Mucosa of descending colon (tissue), 3 donors: ENCODE measurements at regions of chr21 and their contacts with region 1.

Region 1: GRCh38 chr21:41630249-41630648 is 122.3 kb upstream of the TMPRSS2 start:
- DNase-seq: peak; percentile 73 to 82 (median 74)
- ATAC-seq: peak; percentile 87
- H3K4me3 ChIP-seq: no peak overlapping the region
- H3K4me1 ChIP-seq: peaks cover 7% of the 10 kb centered on the region
- CTCF ChIP-seq: no peak

Region 2: DNA sequence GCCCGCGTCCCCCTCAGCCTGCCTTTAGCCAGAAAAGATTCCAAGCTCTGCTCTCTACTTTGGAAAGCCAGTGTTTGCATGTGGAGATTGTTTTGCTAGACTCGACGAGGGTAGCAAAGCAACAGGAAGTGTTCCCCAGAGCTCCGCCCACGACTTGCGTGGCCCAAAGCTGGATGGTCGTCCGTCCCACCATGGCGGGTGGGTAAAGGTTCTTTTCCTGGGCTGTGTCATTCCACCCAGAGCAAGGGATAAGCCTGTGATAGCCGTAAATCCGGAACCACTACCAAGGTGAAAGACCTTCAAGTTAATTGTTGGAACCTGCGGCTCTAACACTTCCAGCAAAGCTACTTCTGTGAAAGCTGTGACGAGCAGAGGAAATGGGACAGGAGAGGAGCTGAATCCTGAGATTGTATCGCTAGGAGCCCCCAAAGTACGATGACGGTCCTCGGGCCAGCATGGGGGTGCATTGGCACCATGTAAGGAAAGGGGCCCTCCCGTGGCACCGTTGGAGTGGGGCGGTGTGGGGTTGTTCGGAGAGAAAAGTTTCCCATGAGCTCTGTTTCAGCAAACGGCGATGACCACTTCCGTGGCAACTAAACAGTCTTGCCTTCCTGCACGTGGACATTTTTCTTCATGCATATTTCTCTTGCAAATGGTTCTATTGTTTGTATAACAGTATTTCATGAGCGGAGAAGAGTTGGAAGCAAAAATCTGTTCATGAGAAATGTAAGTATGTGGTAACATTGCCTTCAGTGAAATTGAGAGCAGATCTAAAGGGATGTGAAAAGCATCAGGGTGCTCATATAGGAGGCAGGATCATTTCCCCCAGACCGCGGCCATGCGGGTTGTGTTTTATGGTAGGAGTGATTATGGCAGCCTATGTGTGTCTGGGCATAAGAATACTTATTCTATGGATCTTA is 260.1 kb before region 1 on chr21:
- intact Hi-C with region 1: no loop called
- DNase-seq: peak in 2 of 3 donors; percentile 22 to 70
- ATAC-seq: peak; percentile 14
- H3K4me3 ChIP-seq: no peak overlapping the region
- H3K4me1 ChIP-seq: no peaks in the 10 kb centered on the region
- CTCF ChIP-seq: no peak

Region 3: DNA sequence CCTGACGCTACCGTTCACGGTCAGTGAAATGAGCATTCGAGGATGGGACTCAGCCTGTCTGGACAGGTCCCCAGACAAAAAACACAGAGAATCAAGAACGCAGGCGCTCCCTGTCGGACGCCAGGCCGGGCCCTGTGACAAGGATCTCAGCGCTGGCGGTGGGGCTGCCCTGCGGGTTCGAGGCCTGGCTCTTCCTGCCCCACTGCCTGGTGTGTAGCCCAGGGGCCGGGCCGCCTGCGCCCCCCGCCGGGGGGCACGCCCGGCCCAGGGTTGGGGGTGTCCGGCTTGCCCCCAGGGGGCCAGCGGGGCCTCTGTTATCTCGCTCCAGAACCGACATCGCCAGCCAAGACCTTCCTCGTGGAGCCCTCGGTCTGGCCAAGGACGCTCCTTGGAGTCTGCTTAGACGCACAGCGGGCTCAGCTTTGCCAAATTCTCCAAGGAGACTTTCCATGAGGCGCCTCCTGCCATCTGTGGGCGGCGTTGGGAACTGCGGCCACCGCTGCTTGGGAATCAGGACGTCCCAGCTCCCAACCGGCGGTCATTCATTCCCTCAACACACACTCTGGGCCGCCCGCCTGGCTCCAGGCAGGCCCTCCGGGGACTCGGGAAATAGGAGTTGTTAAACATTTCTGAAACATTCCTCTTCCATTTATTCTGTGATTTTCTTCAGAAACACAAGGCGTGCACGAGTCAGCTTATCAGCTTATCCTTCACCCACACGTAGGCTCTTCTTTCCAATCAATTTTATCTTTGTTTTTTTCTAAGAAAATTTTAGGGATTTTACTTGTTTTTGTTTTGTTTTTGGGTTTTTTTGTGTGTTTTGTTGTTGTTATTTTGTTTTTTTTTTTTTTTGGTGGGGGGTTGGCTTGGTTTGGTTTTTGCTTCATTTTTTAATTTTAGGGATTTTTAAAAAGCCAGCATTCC is 148.0 kb after region 1 on chr21:
- intact Hi-C with region 1: loop called in 1 of 2 experiments (anchors 10 kb)
- DNase-seq: peak in 2 of 3 donors; percentile 92 to 96
- ATAC-seq: peak; percentile 77
- H3K4me3 ChIP-seq: no peak overlapping the region
- H3K4me1 ChIP-seq: peaks cover 10% of the 10 kb centered on the region
- CTCF ChIP-seq: peak; percentile 94